Heart left ventricle (tissue), 16 donors: ENCODE measurements at regions of chr4 and their contacts with region 1.

Region 1: GRCh38 chr4:9762823-9763475 is 18.5 kb upstream of the DRD5 start:
- DNase-seq: peak in 3 of 5 donors; percentile 46 to 58 (median 56)
- ATAC-seq: peak in 2 of 4 donors; percentile 46 to 60
- H3K4me3 ChIP-seq: no peak overlapping the region
- H3K27ac ChIP-seq: no peak overlapping the region
- H3K4me1 ChIP-seq: no peaks in the 10 kb centered on the region
- H3K27me3 ChIP-seq: peaks cover 0 to 16% (median 0%) of the 10 kb centered on the region in 9 donors
- CTCF ChIP-seq: peak; percentile 50 to 78 (median 73)
- POLR2A ChIP-seq: no peak

Region 2: GRCh38 chr4:9685692-9686091 is 77.3 kb before region 1 on chr4:
- intact Hi-C with region 1: no loop called
- DNase-seq: no peak
- ATAC-seq: no peak
- H3K4me3 ChIP-seq: no peak overlapping the region
- H3K27ac ChIP-seq: no peak overlapping the region
- H3K4me1 ChIP-seq: peaks cover 0 to 2% (median 0%) of the 10 kb centered on the region in 12 donors
- H3K27me3 ChIP-seq: peaks cover 0 to 5% (median 0%) of the 10 kb centered on the region in 9 donors
- CTCF ChIP-seq: no peak
- POLR2A ChIP-seq: no peak

Region 3: DNA sequence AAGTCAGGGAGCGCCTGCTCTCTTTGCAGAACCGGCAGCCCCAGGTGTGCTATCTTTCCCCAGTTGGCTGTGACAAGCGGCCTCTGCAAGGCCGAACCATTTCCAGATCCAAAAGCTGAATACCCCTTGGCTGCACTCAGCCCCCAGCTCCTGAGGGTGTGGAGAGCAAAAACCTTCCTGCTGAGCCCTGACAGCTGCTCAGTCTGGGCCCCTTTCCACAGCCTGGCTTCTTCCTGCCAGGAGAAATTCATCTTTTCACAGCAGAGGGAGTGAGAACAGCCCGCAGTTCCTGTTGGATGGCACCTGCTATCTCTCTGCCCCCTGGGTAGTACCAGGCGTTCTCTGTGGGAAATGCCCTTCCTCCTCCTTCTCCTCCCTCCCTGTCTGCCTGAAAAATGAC is 96.9 kb after region 1 on chr4:
- intact Hi-C with region 1: no loop called
- DNase-seq: no peak
- ATAC-seq: no peak
- H3K4me3 ChIP-seq: no peak overlapping the region
- H3K27ac ChIP-seq: no peak overlapping the region
- H3K4me1 ChIP-seq: no peaks in the 10 kb centered on the region
- H3K27me3 ChIP-seq: no peaks in the 10 kb centered on the region
- CTCF ChIP-seq: no peak
- POLR2A ChIP-seq: no peak

Region 4: GRCh38 chr4:9898596-9899305 is 135.8 kb after region 1 on chr4:
- intact Hi-C with region 1: loop called (anchors 1 to 5 kb)
- DNase-seq: peak in 4 of 5 donors; percentile 56 to 80 (median 74)
- ATAC-seq: peak; percentile 89 to 92 (median 91)
- H3K4me3 ChIP-seq: no peak overlapping the region
- H3K27ac ChIP-seq: no peak overlapping the region
- H3K4me1 ChIP-seq: peaks cover 0 to 14% (median 1%) of the 10 kb centered on the region in 12 donors
- H3K27me3 ChIP-seq: no peaks in the 10 kb centered on the region
- CTCF ChIP-seq: peak; percentile 21 to 70 (median 48)
- POLR2A ChIP-seq: no peak

Region 5: DNA sequence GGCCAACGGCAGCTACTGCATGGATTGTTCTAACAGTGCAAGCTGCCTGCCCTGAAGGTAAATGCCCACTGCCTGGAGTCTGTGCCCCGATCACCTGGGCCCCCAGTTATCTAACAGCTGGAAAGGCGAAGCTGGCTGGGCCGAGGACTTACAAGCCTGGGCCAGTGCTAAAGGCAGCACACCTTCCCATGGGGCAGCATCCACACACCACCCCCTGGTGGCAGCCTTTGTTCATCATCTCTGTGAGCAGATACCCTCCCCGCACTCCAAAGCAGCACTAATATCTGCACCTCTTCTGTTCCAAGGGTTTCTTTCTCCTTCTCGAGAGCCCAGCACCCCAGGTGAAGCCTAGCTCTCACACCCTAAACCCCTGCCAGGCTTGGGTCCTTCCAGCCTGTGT is 250.8 kb after region 1 on chr4:
- intact Hi-C with region 1: loop called (anchors 1 to 2 kb)
- DNase-seq: peak in 2 of 5 donors; percentile 46 to 58
- ATAC-seq: peak; percentile 40 to 71 (median 69)
- H3K4me3 ChIP-seq: no peak overlapping the region
- H3K27ac ChIP-seq: no peak overlapping the region
- H3K4me1 ChIP-seq: peaks cover 0 to 17% (median 6%) of the 10 kb centered on the region in 12 donors
- H3K27me3 ChIP-seq: no peaks in the 10 kb centered on the region
- CTCF ChIP-seq: peak; percentile 34 to 60 (median 39)
- POLR2A ChIP-seq: no peak

Region 6: DNA sequence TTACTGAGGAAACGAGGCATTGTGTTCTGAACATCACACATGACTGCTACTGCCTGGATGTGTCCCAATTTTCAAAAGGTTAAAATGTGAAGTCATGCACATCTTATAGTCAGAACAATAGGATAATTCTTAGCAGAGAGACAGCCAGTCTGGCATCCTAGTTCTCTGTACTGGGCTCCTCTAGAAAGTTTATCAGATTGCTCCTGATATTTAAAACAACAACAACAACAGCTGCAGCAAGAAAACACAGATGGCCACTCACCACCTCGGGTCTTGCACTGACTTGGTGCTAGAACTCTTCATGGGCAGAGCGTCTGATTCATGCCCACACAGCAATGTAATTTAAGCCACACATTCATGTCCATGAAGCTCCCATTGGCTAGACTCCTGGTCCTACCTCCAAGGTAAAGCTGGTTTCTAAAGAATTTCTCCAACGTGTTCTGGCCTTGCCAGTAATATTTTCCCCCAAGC is 291.7 kb after region 1 on chr4:
- intact Hi-C with region 1: loop called in 1 of 10 experiments (anchors 5 kb)
- DNase-seq: no peak
- ATAC-seq: peak; percentile 44 to 83 (median 60)
- H3K4me3 ChIP-seq: no peak overlapping the region
- H3K27ac ChIP-seq: peak overlapping the region in 11 of 12 donors; percentile 19 to 88 (median 51)
- H3K4me1 ChIP-seq: peaks cover 0 to 25% (median 7%) of the 10 kb centered on the region in 12 donors
- H3K27me3 ChIP-seq: no peaks in the 10 kb centered on the region
- CTCF ChIP-seq: no peak
- POLR2A ChIP-seq: no peak

Region 7: DNA sequence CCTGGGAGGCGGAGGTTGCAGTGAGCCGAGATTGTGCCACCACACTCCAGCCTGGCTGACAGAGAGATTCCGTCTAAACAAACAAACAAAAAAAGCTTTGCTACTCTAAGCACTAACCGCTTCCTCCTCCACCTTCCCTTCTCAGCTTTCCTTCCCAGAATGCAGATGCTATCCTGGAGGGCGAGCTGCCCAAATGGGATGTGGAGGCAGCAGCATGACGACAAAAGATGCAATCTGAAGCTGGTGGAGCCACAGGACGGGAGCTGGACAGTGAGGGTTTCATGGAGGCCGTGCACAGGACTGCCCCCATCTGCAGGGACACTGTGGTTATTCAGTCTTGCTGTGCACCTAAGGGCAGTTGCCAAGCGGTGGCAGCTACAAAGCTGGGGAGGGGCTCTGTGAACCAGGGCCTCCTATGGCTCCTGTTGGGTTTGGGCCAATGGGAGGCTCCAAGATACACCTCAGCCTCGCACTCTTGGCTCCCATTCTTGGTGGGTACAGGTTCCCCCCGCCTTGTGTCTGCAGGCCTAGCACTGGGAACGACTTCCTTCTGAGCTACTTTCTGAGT is 306.2 kb after region 1 on chr4:
- intact Hi-C with region 1: loop called in 3 of 10 experiments (anchors 5 kb)
- DNase-seq: no peak
- ATAC-seq: no peak
- H3K4me3 ChIP-seq: no peak overlapping the region
- H3K27ac ChIP-seq: no peak overlapping the region
- H3K4me1 ChIP-seq: peaks cover 0 to under 1% (median 0%) of the 10 kb centered on the region in 12 donors
- H3K27me3 ChIP-seq: no peaks in the 10 kb centered on the region
- CTCF ChIP-seq: no peak
- POLR2A ChIP-seq: no peak

Region 8: DNA sequence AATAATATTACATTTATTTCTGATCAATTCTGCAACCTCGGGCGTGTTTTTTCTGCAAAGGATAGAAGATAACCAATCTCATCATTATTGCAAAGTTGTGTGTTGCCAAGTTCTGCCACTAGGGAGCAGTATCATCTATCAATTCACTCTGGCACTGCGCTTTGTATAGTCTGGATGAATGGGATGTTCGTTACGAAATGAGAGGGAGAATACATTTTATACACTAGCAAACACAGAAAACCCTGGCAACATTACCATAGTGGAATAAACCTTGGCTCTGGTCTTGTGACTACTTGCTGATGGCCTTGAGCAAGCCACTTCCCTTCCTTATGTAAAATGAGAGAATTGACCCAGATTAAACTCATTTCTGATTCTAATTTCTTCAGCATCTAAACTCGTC is 791.7 kb after region 1 on chr4:
- intact Hi-C with region 1: loop called in 2 of 10 experiments (anchors 5 to 10 kb)
- DNase-seq: peak in 2 of 5 donors; percentile 16 to 23
- ATAC-seq: peak in 3 of 4 donors; percentile 37 to 74 (median 67)
- H3K4me3 ChIP-seq: no peak overlapping the region
- H3K27ac ChIP-seq: no peak overlapping the region
- H3K4me1 ChIP-seq: no peaks in the 10 kb centered on the region
- H3K27me3 ChIP-seq: peaks cover 0 to 14% (median 0%) of the 10 kb centered on the region in 9 donors
- CTCF ChIP-seq: peak; percentile 58 to 86 (median 76)
- POLR2A ChIP-seq: no peak